ENCODE measurements at regions of chr1 and their contacts with region 1.

Region 1: GRCh38 chr1:164772635-164773034 is 213.7 kb downstream of the PBX1 start:
- DNase-seq: peak in 4 of 5 donors; percentile 46 to 84 (median 66)
- ATAC-seq: peak; percentile 83 to 90 (median 90)
- H3K4me3 ChIP-seq: no peak overlapping the region
- H3K27ac ChIP-seq: peak overlapping the region in 11 of 12 donors; percentile 35 to 79 (median 53)
- H3K4me1 ChIP-seq: peaks cover 0 to 78% (median 43%) of the 10 kb centered on the region in 12 donors
- H3K27me3 ChIP-seq: no peaks in the 10 kb centered on the region
- CTCF ChIP-seq: no peak
- POLR2A ChIP-seq: no peak

Region 2: GRCh38 chr1:164533116-164533515 is 239.5 kb before region 1 on chr1:
- intact Hi-C with region 1: no loop called
- DNase-seq: no peak
- ATAC-seq: no peak
- H3K4me3 ChIP-seq: no peak overlapping the region
- H3K27ac ChIP-seq: no peak overlapping the region
- H3K4me1 ChIP-seq: no peaks in the 10 kb centered on the region
- H3K27me3 ChIP-seq: no peaks in the 10 kb centered on the region
- CTCF ChIP-seq: no peak
- POLR2A ChIP-seq: no peak

Region 3: DNA sequence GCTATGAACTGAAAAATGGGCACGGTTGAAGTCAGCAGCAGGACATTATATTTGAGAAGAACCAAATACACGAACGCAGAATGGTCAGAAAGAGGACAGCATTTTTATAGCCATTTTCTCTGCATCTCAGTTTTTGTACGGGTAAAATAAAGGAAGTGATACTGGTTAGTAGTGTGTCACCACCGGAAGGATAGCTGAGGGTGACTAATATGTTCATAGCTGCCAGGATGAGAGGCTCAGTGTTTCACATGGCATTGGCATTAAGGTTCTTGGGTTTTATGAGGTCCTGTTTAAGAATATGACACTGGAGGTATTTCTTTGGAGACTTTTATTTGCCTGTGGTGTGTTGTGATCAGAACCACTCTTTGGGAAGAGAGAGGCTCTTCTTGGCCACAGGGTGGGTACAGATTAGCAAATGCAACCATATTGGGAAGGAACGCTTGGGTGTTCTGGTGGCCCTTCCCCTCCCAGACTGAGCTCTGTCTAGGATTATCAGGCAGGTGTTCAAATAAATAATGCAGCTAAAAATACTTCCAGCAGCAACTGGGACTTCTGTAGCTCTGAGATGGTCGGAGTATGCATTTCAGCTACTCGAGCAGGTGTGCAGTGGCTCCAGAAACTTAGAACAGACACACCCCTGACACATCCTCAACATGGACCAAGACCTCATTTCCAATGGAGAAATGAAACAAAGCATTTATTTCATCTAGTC is 55.5 kb before region 1 on chr1:
- intact Hi-C with region 1: loop called in 1 of 10 experiments (anchors 5 kb)
- DNase-seq: no peak
- ATAC-seq: no peak
- H3K4me3 ChIP-seq: no peak overlapping the region
- H3K27ac ChIP-seq: peak overlapping the region in 2 of 12 donors; percentile 3 to 30
- H3K4me1 ChIP-seq: peaks cover 0 to 79% (median 41%) of the 10 kb centered on the region in 12 donors
- H3K27me3 ChIP-seq: no peaks in the 10 kb centered on the region
- CTCF ChIP-seq: no peak
- POLR2A ChIP-seq: no peak

Region 4: GRCh38 chr1:164735315-164736052 is 37.2 kb before region 1 on chr1:
- intact Hi-C with region 1: no loop called
- DNase-seq: no peak
- ATAC-seq: peak in 2 of 4 donors; percentile 30 to 35
- H3K4me3 ChIP-seq: no peak overlapping the region
- H3K27ac ChIP-seq: no peak overlapping the region
- H3K4me1 ChIP-seq: peaks cover 0 to 38% (median 2%) of the 10 kb centered on the region in 12 donors
- H3K27me3 ChIP-seq: no peaks in the 10 kb centered on the region
- CTCF ChIP-seq: no peak
- POLR2A ChIP-seq: no peak